IMR-90 (cell line): ENCODE measurements at regions of chr16 and their contacts with region 1.

Region 1: GRCh38 chr16:88442727-88443576 is 10.1 kb upstream of the ZFPM1 start:
- DNase-seq: peak; percentile 55
- ATAC-seq: peak; percentile 57
- H3K4me3 ChIP-seq: no peak overlapping the region
- H3K27ac ChIP-seq: no peak overlapping the region
- H3K4me1 ChIP-seq: peaks cover 6% of the 10 kb centered on the region
- H3K27me3 ChIP-seq: no peaks in the 10 kb centered on the region
- CTCF ChIP-seq: peak; percentile 80
- POLR2A ChIP-seq: no peak
- RAD21 ChIP-seq: peak; percentile 83

Region 2: GRCh38 chr16:87790278-87791032 is 652.5 kb before region 1 on chr16:
- CTCF ChIA-PET with region 1: no interaction called
- POLR2A ChIA-PET with region 1: no interaction called
- dilution Hi-C with region 1: no loop called
- in situ Hi-C with region 1: no loop called
- intact Hi-C with region 1: no loop called
- DNase-seq: peak; percentile 33
- ATAC-seq: peak; percentile 57
- H3K4me3 ChIP-seq: no peak overlapping the region
- H3K27ac ChIP-seq: peak overlapping the region; percentile 14; the same call in 1 of the 2 replicates
- H3K4me1 ChIP-seq: peaks cover 25% of the 10 kb centered on the region
- H3K27me3 ChIP-seq: no peaks in the 10 kb centered on the region
- CTCF ChIP-seq: no peak
- POLR2A ChIP-seq: no peak
- RAD21 ChIP-seq: no peak

Region 3: DNA sequence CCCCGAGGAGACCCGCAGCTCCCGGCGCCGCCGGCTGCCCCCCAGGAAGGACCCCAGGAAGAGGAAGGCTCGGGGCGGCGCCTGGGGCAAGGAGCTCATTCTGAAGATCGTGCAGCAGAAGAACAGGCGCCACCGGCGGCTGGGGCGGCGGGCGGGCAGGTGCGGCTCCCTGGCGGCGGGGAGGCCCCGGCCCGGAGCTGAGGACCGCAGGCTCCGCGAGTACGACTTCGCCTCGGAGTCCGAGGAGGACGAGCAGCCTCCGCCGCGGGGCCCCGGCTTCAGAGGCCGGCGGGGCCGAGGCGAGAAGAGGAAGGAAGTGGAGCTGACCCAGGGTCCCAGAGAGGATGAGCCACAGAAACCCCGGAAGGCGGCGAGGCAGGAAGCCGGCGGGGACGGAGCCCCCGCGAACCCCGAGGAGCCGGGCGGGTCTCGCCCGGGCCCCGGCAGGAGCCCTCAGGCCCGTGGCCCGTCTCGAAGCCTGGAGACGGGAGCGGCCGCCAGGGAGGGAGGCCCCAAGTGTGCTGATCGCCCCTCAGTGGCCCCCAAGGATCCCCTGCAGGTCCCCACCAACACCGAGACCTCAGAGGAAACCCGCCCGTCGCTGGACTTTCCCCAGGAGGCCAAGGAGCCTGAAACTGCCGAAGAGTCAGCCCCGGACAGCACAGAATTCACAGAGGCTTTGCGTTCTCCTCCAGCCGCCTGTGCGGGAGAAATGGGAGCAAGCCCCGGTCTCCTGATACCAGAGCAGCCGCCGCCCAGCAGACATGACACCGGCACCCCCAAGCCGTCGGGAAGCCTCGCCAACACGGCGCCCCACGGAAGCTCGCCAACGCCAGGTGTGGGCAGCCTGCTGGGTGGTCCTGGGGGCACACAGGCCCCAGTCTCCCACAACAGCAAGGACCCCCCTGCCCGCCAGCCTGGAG is 12.2 kb before region 1 on chr16:
- CTCF ChIA-PET with region 1: no interaction called
- POLR2A ChIA-PET with region 1: no interaction called
- dilution Hi-C with region 1: no loop called
- in situ Hi-C with region 1: no loop called
- intact Hi-C with region 1: no loop called
- DNase-seq: no peak
- ATAC-seq: no peak
- H3K4me3 ChIP-seq: no peak overlapping the region
- H3K27ac ChIP-seq: no peak overlapping the region
- H3K4me1 ChIP-seq: no peaks in the 10 kb centered on the region
- H3K27me3 ChIP-seq: no peaks in the 10 kb centered on the region
- CTCF ChIP-seq: no peak
- POLR2A ChIP-seq: no peak
- RAD21 ChIP-seq: no peak

Region 4: DNA sequence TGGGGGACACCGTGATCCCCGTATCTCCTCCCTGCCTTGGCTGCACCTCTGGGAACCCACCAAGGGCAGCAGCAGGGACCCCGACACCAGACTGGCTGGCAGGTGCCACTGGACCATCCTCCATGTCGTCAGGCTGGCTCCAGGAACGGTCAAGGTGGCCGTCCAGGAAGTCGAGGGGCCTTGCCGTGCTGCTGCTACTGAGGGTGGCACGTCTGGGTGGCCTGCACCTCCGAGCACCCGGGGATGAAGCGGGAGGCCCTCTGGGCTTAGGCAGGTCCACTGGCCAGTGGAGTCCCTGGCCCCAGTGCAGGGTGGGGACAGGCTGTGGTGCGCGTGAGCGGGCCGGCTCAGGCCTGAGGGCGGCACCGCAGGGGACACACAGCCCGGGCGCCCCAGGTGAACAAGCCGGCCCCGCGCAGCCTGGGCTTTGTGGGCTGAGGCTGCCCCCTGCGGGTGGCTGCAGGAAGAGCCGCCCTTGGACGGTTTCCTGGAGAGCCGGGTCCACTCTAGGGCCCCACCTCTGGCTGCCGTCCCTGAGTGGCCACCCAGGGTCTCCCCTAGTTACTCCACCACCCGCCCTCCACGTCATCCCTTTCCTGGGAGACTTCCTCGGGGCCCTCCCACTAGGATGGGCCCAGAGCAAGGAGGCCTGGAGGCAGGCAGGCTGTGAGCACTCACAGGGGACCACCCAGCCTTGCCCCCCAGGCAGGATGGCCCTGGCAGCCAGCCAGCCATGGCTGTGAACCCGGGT is 84.4 kb after region 1 on chr16:
- CTCF ChIA-PET with region 1: no interaction called
- POLR2A ChIA-PET with region 1: no interaction called
- dilution Hi-C with region 1: no loop called
- in situ Hi-C with region 1: no loop called
- intact Hi-C with region 1: loop called (anchors 1 kb)
- DNase-seq: peak; percentile 47
- ATAC-seq: peak; percentile 89
- H3K4me3 ChIP-seq: no peak overlapping the region
- H3K27ac ChIP-seq: no peak overlapping the region
- H3K4me1 ChIP-seq: peaks cover 1% of the 10 kb centered on the region; the same call in 1 of the 2 replicates
- H3K27me3 ChIP-seq: no peaks in the 10 kb centered on the region
- CTCF ChIP-seq: peak; percentile 89
- POLR2A ChIP-seq: no peak
- RAD21 ChIP-seq: peak; percentile 90

Region 5: GRCh38 chr16:88561485-88562369 is 118.8 kb after region 1 on chr16:
- CTCF ChIA-PET with region 1: no interaction called
- POLR2A ChIA-PET with region 1: no interaction called
- dilution Hi-C with region 1: no loop called
- in situ Hi-C with region 1: no loop called
- intact Hi-C with region 1: loop called (anchors 1 kb)
- DNase-seq: peak; percentile 43
- ATAC-seq: peak; percentile 94
- H3K4me3 ChIP-seq: no peak overlapping the region; the same call in 1 of the 2 replicates
- H3K27ac ChIP-seq: no peak overlapping the region
- H3K4me1 ChIP-seq: no peaks in the 10 kb centered on the region; the same call in 1 of the 2 replicates
- H3K27me3 ChIP-seq: peaks cover 8% of the 10 kb centered on the region
- CTCF ChIP-seq: peak; percentile 81
- POLR2A ChIP-seq: no peak
- RAD21 ChIP-seq: peak; percentile 82